GM12878 (cell line): ENCODE measurements at regions of chr9 and their contacts with region 1.

Region 1: GRCh38 chr9:112971415-112971814 is 40.6 kb downstream of the ZNF883 start:
- DNase-seq: no peak
- ATAC-seq: no peak
- H3K4me3 ChIP-seq: no peak overlapping the region
- H3K27ac ChIP-seq: no peak overlapping the region
- H3K4me1 ChIP-seq: no peaks in the 10 kb centered on the region
- H3K27me3 ChIP-seq: no peaks in the 10 kb centered on the region
- CTCF ChIP-seq: peak in 2 of 3 experiments; percentile 20 to 22; a peak in 3 of 6 replicates
- EP300 ChIP-seq: no peak
- POLR2A ChIP-seq: no peak
- RAD21 ChIP-seq: no peak

Region 2: DNA sequence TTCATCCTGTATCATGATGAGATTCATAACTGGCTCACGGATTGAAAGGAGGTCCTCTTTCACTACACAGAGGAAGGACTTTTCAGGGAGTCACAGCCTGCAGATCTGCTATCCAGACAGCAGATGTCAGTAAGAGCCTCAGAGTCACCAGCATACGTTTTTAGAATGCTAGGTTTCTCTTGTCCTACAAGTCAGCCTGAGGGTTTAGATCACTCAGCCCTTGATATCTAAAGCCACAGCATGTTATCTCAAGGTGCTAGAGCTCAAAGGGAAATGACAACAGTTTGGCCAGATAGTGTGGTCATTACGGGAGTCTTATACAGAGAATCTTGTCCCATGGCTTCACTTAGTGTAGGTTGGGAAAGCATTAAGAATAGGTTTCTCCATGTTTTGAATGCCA is 49.9 kb before region 1 on chr9:
- CTCF ChIA-PET with region 1: interaction called, 10 read pairs
- POLR2A ChIA-PET with region 1: no interaction called
- RAD21 ChIA-PET with region 1: no interaction called
- SMC1A ChIA-PET with region 1: no interaction called
- in situ Hi-C with region 1: no loop called
- intact Hi-C with region 1: no loop called
- DNase-seq: no peak
- ATAC-seq: peak; percentile 60
- H3K4me3 ChIP-seq: no peak overlapping the region
- H3K27ac ChIP-seq: no peak overlapping the region
- H3K4me1 ChIP-seq: no peaks in the 10 kb centered on the region
- H3K27me3 ChIP-seq: no peaks in the 10 kb centered on the region; a peak in 1 of 4 replicates
- CTCF ChIP-seq: peak; percentile 53 to 65 (median 62)
- EP300 ChIP-seq: no peak
- POLR2A ChIP-seq: no peak
- RAD21 ChIP-seq: peak; percentile 58

Region 3: DNA sequence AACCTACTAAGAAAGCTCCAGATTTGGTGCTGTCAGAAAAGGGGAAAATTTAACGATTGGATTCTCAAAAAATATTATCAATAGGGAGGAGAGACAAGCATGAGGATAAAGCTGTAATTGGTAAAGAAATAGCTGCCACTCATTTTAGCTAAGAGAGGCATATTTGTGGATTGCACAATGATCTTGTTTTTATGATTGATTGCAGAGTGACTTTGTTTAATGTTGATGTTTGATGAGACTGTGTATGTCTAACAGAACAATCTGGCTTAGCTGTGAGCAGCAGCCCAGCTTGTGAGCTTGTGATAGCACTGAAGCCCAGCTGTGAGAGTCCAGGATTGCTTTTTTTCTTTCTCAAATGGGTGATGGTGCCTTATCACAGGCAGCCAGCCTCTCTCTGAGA is 15.9 kb before region 1 on chr9:
- CTCF ChIA-PET with region 1: no interaction called
- POLR2A ChIA-PET with region 1: no interaction called
- RAD21 ChIA-PET with region 1: no interaction called
- SMC1A ChIA-PET with region 1: no interaction called
- in situ Hi-C with region 1: no loop called
- intact Hi-C with region 1: no loop called
- DNase-seq: no peak
- ATAC-seq: no peak
- H3K4me3 ChIP-seq: no peak overlapping the region
- H3K27ac ChIP-seq: no peak overlapping the region
- H3K4me1 ChIP-seq: no peaks in the 10 kb centered on the region
- H3K27me3 ChIP-seq: no peaks in the 10 kb centered on the region
- CTCF ChIP-seq: no peak
- EP300 ChIP-seq: no peak
- POLR2A ChIP-seq: no peak
- RAD21 ChIP-seq: no peak